ENCODE measurements at regions of chr3 and their contacts with region 1.

Region 1: GRCh38 chr3:171407759-171408158 is 52.4 kb downstream of the TNIK start:
- DNase-seq: peak; percentile 87
- ATAC-seq: peak; percentile 96
- H3K4me3 ChIP-seq: no peak overlapping the region
- H3K27ac ChIP-seq: peak overlapping the region; percentile 3; the same call in 1 of the 2 replicates
- H3K4me1 ChIP-seq: peaks cover 26% of the 10 kb centered on the region
- H3K27me3 ChIP-seq: no peaks in the 10 kb centered on the region
- CTCF ChIP-seq: no peak

Region 2: GRCh38 chr3:171358881-171359198 is 48.9 kb before region 1 on chr3:
- CTCF ChIA-PET with region 1: no interaction called
- POLR2A ChIA-PET with region 1: no interaction called
- intact Hi-C with region 1: no loop called
- DNase-seq: no peak
- ATAC-seq: no peak
- H3K4me3 ChIP-seq: no peak overlapping the region
- H3K27ac ChIP-seq: no peak overlapping the region
- H3K4me1 ChIP-seq: peaks cover 48% of the 10 kb centered on the region
- H3K27me3 ChIP-seq: no peaks in the 10 kb centered on the region
- CTCF ChIP-seq: no peak

Region 3: DNA sequence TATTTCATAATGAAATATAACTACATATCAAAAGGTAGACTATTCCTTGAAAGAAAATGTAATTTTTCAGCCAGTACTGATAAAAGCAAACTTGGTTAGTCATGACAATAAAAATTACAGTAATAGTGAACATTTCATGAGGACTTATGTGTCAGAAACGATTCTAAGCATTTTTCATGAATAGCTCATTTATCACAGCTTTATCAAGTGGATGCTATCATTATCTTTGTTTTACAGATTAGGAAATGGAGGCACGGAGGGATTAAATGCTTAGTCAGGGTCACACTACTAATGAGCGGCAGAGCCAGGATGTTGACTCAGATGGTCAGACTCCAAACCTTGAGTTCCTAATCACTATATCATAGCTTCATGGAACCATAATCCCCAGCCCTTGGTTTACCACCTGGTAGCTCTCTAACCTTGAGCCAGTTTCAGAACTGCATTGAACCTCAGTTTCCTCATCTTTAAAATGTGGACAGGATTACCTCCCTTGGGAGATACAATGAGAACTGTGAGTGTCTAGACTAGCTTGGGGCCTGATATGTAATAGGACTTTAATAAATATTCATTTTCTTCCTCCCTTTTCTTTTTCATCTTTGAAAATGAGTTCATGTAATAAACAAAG is 33.0 kb before region 1 on chr3:
- CTCF ChIA-PET with region 1: no interaction called
- POLR2A ChIA-PET with region 1: interaction called, 20 read pairs
- intact Hi-C with region 1: no loop called
- DNase-seq: peak; percentile 59
- ATAC-seq: peak; percentile 65
- H3K4me3 ChIP-seq: no peak overlapping the region
- H3K27ac ChIP-seq: peak overlapping the region; percentile 19
- H3K4me1 ChIP-seq: peaks cover 23% of the 10 kb centered on the region
- H3K27me3 ChIP-seq: no peaks in the 10 kb centered on the region
- CTCF ChIP-seq: no peak

Region 4: GRCh38 chr3:171383206-171384018 is 24.3 kb before region 1 on chr3:
- CTCF ChIA-PET with region 1: interaction called, 10 read pairs
- POLR2A ChIA-PET with region 1: no interaction called
- intact Hi-C with region 1: no loop called
- DNase-seq: no peak
- ATAC-seq: no peak
- H3K4me3 ChIP-seq: no peak overlapping the region
- H3K27ac ChIP-seq: no peak overlapping the region
- H3K4me1 ChIP-seq: peaks cover 7% of the 10 kb centered on the region; the same call in 1 of the 2 replicates
- H3K27me3 ChIP-seq: no peaks in the 10 kb centered on the region
- CTCF ChIP-seq: no peak

Region 5: GRCh38 chr3:171460725-171461524 is 53.2 kb after region 1 on chr3:
- CTCF ChIA-PET with region 1: no interaction called
- POLR2A ChIA-PET with region 1: no interaction called
- intact Hi-C with region 1: no loop called
- DNase-seq: peak; percentile 70
- ATAC-seq: peak; percentile 54
- H3K4me3 ChIP-seq: peak overlapping the region; percentile 84
- H3K27ac ChIP-seq: peak overlapping the region; percentile 62
- H3K4me1 ChIP-seq: peaks cover 26% of the 10 kb centered on the region
- H3K27me3 ChIP-seq: no peaks in the 10 kb centered on the region
- CTCF ChIP-seq: peak; percentile 26; the same call in 1 of the 2 replicates

Region 6: GRCh38 chr3:171480526-171480925 is 72.8 kb after region 1 on chr3:
- CTCF ChIA-PET with region 1: no interaction called
- POLR2A ChIA-PET with region 1: no interaction called
- intact Hi-C with region 1: no loop called
- DNase-seq: no peak
- ATAC-seq: no peak
- H3K4me3 ChIP-seq: no peak overlapping the region
- H3K27ac ChIP-seq: no peak overlapping the region
- H3K4me1 ChIP-seq: no peaks in the 10 kb centered on the region
- H3K27me3 ChIP-seq: no peaks in the 10 kb centered on the region
- CTCF ChIP-seq: no peak

Measured in PC-3 (cell line).